ENCODE measurements at regions of chr5 and their contacts with region 1.

Region 1: DNA sequence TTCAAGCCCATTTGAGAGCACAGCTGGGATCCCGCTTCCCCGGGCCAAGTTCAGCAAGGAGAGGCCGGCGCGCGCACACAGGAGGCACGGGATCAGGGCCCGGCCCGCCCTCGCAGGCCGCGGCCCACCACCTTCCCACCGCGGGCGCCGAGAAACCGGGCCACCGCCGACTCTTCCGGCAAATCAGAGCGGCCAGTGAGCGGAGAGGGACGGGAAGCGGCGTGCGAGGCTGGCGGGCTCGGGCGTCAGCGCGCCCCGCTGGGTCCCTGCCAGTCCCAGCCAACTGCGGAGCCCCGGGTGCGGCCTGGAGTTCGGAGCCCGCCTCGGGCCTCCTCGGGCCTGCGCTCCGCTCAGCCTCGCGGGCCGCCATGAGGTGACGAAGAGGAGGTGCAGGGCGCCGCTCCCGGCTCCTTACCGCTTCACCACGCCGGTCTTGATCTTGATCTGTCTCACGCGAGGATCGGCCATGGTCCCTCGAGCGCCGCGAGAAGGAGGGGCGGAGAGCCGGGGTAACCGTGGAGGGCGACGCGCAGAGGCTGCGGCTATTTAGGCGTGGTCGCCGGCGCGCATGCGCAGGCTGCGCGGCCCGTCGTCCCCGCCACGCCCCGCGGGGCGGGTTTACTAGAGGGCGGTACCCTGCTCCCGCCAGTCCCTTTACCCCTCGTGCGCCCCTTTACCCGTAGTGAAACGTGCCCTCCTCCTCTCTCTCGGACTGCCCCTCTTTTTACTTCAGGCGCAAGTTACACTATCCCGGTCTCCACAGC is at the start of gene TBCA:
- DNase-seq: peak; percentile 96
- ATAC-seq: peak; percentile 89
- H3K4me3 Mint-ChIP-seq: peak within 1 kb of the TSS; percentile 95
- H3K27ac Mint-ChIP-seq: peak within 1 kb of the TSS; percentile 93
- H3K4me1 Mint-ChIP-seq: peaks cover 44% of the 10 kb centered on the region
- H3K27me3 Mint-ChIP-seq: no peaks in the 10 kb centered on the region
- CTCF ChIP-seq: no peak
- total RNA-seq, gene TBCA: 113 and 128 TPM in 2 replicates

Region 2: GRCh38 chr5:76402886-76403765 is 1372.8 kb before region 1 on chr5 and contains the start of gene IQGAP2:
- CTCF ChIA-PET with region 1: no interaction called
- POLR2A ChIA-PET with region 1: no interaction called
- intact Hi-C with region 1: loop called (anchors 10 kb)
- DNase-seq: peak; percentile 82
- ATAC-seq: peak; percentile 75
- H3K4me3 Mint-ChIP-seq: peak within 1 kb of the TSS; percentile 95
- H3K27ac Mint-ChIP-seq: peak within 1 kb of the TSS; percentile 97
- H3K4me1 Mint-ChIP-seq: peaks cover 51% of the 10 kb centered on the region
- H3K27me3 Mint-ChIP-seq: peaks cover 3% of the 10 kb centered on the region
- CTCF ChIP-seq: no peak
- total RNA-seq, gene IQGAP2: 6.7 and 8.8 TPM in 2 replicates

Region 3: DNA sequence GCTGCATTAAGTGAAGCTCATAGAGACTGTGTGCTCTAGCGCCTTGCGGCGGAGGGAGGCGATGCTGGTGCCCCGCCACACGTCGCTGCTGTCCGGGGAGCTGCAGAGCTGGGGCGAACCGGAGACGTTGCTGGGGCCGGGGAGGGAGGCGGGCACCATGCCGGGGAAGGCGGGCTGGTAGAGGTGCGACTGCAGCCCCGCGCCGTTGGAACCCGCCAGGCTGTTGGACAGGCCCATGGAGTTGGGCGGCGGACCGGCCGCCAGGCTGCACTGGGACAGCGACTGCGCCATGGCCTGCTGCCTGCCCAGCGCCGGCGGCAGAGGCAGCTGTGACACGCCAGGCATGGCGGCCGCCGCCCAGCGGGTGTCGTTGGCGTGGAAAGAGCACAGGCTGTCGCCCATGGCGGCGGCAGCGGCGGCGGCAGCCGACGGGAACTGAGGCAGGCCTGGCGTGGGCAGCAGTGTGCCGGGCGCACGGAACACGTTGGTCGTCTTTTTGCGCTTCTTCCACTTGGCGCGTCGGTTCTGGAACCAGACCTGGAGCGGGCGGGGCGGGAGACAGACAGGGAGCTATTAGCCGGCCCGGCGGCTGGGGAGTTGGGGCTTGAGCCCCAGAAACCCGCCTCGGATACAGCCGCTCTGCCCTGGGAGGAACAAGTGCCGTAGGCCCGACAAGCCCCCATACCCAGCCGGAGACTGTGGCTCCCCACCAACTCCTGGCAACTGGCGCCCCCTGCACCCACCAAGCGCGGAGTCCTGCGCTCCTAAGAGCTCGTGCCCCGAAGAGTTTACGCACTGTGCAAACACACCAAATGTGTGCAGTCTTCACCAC is 145.5 kb before region 1 on chr5:
- CTCF ChIA-PET with region 1: no interaction called
- POLR2A ChIA-PET with region 1: no interaction called
- intact Hi-C with region 1: loop called (anchors 1 kb)
- DNase-seq: peak; percentile 49
- ATAC-seq: peak; percentile 79
- H3K4me3 Mint-ChIP-seq: peak overlapping the region; percentile 82
- H3K27ac Mint-ChIP-seq: peak overlapping the region; percentile 56
- H3K4me1 Mint-ChIP-seq: peaks cover 28% of the 10 kb centered on the region
- H3K27me3 Mint-ChIP-seq: peaks cover 41% of the 10 kb centered on the region
- CTCF ChIP-seq: no peak

Region 4: DNA sequence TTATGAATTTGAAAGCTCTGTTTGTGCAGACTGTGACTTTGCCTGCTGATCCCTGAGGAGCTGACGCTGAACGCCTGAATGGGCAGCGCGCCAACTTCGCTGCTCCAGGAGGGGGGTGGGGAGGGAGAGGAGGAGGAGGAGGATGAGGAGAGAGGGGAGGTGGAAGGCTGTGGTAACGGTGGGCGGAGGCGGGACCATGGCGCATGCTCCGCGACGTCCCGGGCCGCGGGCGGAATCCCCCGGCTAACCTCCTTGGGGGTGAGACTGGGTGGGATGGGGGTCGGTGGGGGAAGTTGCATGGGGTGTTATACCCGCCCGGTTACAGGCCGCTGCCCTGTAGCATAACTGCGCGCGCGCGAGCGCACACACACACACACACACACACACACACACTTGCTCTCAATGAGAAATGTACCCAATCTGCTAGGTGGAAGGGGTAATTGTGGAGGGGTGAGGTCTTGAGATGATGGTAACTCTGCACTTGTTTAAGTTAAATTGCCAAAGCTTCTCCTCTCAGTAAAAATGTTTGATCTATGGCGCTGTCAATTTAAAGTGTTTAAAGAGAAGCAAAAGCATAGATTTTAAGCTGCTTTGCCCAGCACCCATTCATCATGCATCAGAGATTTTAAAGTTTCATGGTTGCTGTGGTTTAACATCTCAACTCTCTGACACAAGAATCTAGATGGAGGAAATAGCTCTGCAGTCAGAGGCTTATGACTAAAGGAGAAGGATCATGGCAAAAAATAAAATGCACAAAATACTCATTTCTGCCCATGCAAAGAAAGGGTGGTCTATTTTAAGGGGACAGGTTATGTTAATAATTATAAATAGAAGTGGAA is 76.8 kb after region 1 on chr5:
- CTCF ChIA-PET with region 1: no interaction called
- POLR2A ChIA-PET with region 1: no interaction called
- intact Hi-C with region 1: loop called (anchors 1 kb)
- DNase-seq: peak; percentile 68
- ATAC-seq: peak; percentile 89
- H3K4me3 Mint-ChIP-seq: peak overlapping the region; percentile 81
- H3K27ac Mint-ChIP-seq: peak overlapping the region; percentile 92
- H3K4me1 Mint-ChIP-seq: peaks cover 17% of the 10 kb centered on the region
- H3K27me3 Mint-ChIP-seq: no peaks in the 10 kb centered on the region
- CTCF ChIP-seq: no peak

Region 5: GRCh38 chr5:77952636-77953212 is 176.8 kb after region 1 on chr5:
- CTCF ChIA-PET with region 1: no interaction called
- POLR2A ChIA-PET with region 1: no interaction called
- intact Hi-C with region 1: no loop called
- DNase-seq: no peak
- ATAC-seq: no peak
- H3K4me3 Mint-ChIP-seq: no peak overlapping the region
- H3K27ac Mint-ChIP-seq: no peak overlapping the region
- H3K4me1 Mint-ChIP-seq: peaks cover 2% of the 10 kb centered on the region
- H3K27me3 Mint-ChIP-seq: peaks cover 17% of the 10 kb centered on the region
- CTCF ChIP-seq: no peak

Region 6: DNA sequence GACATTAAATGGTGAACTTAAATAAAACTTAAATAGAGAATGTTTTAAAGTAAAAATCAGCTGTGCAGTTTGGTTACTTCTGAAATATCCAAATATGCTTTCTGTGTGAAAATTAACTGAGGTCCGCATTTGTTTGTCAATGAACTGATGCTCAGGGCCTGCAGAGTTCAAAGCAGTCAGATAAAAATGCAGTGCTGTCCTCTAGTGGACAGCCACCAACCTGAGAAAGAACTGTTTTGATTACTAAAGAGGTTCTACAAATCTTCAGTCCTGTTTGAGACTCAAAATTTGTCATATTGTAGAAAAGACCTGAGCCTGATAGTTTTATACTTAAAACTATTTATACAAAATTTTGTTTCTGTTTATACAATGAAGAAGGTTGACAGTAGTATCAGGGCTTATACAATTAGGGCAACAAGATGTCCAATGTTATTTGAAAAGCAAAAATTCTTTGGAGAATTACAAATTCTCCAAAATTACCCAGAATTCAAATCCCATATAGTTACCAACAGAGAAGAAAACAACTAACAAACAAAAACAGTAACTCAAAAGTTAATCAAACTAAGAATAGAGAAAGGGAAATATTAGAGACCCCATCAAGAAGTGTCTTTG is 232.5 kb after region 1 on chr5:
- CTCF ChIA-PET with region 1: no interaction called
- POLR2A ChIA-PET with region 1: no interaction called
- intact Hi-C with region 1: loop called (anchors 1 kb)
- DNase-seq: no peak
- ATAC-seq: no peak
- H3K4me3 Mint-ChIP-seq: no peak overlapping the region
- H3K27ac Mint-ChIP-seq: no peak overlapping the region
- H3K4me1 Mint-ChIP-seq: no peaks in the 10 kb centered on the region
- H3K27me3 Mint-ChIP-seq: no peaks in the 10 kb centered on the region
- CTCF ChIP-seq: peak; percentile 47

Region 7: DNA sequence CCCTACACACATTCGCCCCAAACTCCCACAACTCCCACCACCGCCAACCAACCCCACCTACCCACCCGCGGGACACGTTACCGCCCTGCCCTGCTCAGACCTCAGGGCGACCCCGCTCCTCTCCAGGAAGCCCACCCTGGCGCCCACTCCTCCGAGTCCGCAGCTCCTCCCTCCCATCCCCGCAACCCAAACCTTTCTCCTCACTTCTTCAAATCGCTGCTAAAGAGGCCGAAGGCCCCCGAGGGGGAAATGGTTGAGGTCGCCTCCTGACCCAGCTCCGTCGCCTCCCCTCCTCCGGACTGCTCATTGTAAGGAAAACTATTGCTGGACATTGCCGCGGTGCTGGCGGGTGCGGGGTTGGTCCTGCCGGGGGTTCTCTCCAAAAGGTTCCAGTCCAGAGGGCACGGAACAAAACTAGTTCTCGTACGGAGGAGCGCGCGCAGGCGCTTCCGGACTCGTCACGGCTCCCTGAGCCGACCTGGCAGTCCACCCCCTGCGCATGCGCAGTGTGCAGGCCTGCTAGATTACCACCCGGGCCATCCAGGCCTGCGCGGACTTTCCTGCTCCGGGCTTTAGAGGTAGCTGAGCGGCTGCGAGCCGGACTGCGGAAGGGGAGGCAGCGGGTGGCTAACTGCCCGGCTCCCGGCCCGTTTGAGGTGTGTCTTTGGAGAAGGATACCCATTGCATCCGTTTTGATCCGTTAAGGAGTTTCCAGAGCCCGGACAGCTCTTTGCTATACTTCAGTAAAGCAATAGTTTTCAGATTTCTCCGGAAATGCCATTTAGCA is 518.5 kb after region 1 on chr5 and contains the start of gene AP3B1:
- CTCF ChIA-PET with region 1: no interaction called
- POLR2A ChIA-PET with region 1: no interaction called
- intact Hi-C with region 1: loop called (anchors 2 kb)
- DNase-seq: peak; percentile 96
- ATAC-seq: peak; percentile 94
- H3K4me3 Mint-ChIP-seq: peak within 1 kb of the TSS; percentile 98
- H3K27ac Mint-ChIP-seq: peak within 1 kb of the TSS; percentile 98
- H3K4me1 Mint-ChIP-seq: peaks cover 44% of the 10 kb centered on the region
- H3K27me3 Mint-ChIP-seq: no peaks in the 10 kb centered on the region
- CTCF ChIP-seq: no peak
- total RNA-seq, gene AP3B1: 46.8 and 52.9 TPM in 2 replicates

Region 8: DNA sequence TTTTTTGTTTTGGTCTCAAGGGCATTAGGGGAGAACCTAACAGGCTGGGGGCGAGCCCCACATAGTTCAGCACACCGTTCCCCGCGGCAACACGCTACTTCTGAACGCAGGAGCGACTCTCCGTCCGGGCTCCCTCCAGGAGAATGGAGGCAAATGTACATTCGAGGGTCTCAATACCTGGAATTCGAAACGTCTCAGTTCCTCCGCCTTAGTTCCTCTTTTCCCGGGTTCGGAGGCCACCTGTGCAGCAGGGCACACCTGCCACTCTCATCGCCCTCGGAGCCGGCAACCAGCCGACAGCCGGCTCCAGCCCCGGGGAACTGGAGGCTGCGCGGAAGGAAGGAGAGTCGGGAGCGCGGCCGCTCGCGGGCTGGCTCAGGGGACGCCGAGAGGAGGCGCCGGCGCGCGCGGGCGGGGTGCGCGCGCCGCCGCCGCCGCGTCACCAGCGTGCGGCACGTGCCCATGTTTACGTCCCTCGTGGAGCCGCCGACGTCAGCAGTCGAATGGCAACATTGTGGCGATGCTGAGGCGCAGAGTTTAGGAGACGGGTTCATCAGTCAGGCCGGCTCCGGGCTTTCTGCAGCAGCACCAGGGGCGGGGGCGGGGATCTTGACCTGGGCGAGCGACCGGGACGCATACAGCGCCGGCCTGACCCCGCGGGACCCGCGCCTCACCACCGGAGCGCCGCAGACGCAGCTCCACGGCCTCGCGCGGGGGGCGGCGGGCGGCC is 1459.8 kb after region 1 on chr5 and contains the start of gene JMY:
- CTCF ChIA-PET with region 1: no interaction called
- POLR2A ChIA-PET with region 1: no interaction called
- intact Hi-C with region 1: loop called (anchors 2 kb)
- DNase-seq: peak; percentile 68
- ATAC-seq: peak; percentile 79
- H3K4me3 Mint-ChIP-seq: peak within 1 kb of the TSS; percentile 91
- H3K27ac Mint-ChIP-seq: peak within 1 kb of the TSS; percentile 94
- H3K4me1 Mint-ChIP-seq: peaks cover 34% of the 10 kb centered on the region
- H3K27me3 Mint-ChIP-seq: no peaks in the 10 kb centered on the region
- CTCF ChIP-seq: no peak
- total RNA-seq, gene JMY: 6.4 and 6.9 TPM in 2 replicates

Measured in activated B cell treated with CpG ODN at 0.5 μM for 24 hours (primary cell).